Colonic mucosa (tissue), 4 donors: ENCODE measurements at regions of chr2 and their contacts with region 1.

Region 1: GRCh38 chr2:158006961-158007719 is 94.5 kb upstream of the UPP2 start:
- DNase-seq: no peak
- H3K4me3 ChIP-seq: no peak overlapping the region
- H3K27ac ChIP-seq: no peak overlapping the region
- H3K4me1 ChIP-seq: no peaks in the 10 kb centered on the region
- H3K27me3 ChIP-seq: no peaks in the 10 kb centered on the region
- CTCF ChIP-seq: no peak

Region 2: GRCh38 chr2:157327621-157328500 is 679.3 kb before region 1 on chr2:
- intact Hi-C with region 1: loop called (anchors 10 kb)
- DNase-seq: peak; percentile 85
- H3K4me3 ChIP-seq: no peak overlapping the region
- H3K27ac ChIP-seq: no peak overlapping the region
- H3K4me1 ChIP-seq: no peaks in the 10 kb centered on the region
- H3K27me3 ChIP-seq: no peaks in the 10 kb centered on the region
- CTCF ChIP-seq: peak; percentile 93

Region 3: GRCh38 chr2:157777427-157777826 is 229.7 kb before region 1 on chr2:
- intact Hi-C with region 1: loop called (anchors 2 kb)
- DNase-seq: peak; percentile 45
- H3K4me3 ChIP-seq: no peak overlapping the region
- H3K27ac ChIP-seq: no peak overlapping the region
- H3K4me1 ChIP-seq: no peaks in the 10 kb centered on the region
- H3K27me3 ChIP-seq: no peaks in the 10 kb centered on the region
- CTCF ChIP-seq: peak; percentile 47

Region 4: GRCh38 chr2:157789933-157790511 is 217.1 kb before region 1 on chr2:
- intact Hi-C with region 1: no loop called
- DNase-seq: peak; percentile 53
- H3K4me3 ChIP-seq: no peak overlapping the region
- H3K27ac ChIP-seq: peak overlapping the region; percentile 11
- H3K4me1 ChIP-seq: peaks cover 7% of the 10 kb centered on the region
- H3K27me3 ChIP-seq: no peaks in the 10 kb centered on the region
- CTCF ChIP-seq: no peak

Region 5: GRCh38 chr2:157876066-157876787 is 130.9 kb before region 1 on chr2 and contains the start of gene ACVR1:
- intact Hi-C with region 1: loop called (anchors 10 kb)
- DNase-seq: peak; percentile 94
- H3K4me3 ChIP-seq: peak within 1 kb of the TSS; percentile 73
- H3K27ac ChIP-seq: peak within 1 kb of the TSS; percentile 97
- H3K4me1 ChIP-seq: peaks cover 5% of the 10 kb centered on the region
- H3K27me3 ChIP-seq: no peaks in the 10 kb centered on the region
- CTCF ChIP-seq: no peak
- total RNA-seq, gene ACVR1: 15.8 to 18.0 TPM